Activated naive CD4-positive, alpha-beta T cell treated with anti-CD3 and anti-CD28 coated beads for 36 hours (primary cell): ENCODE measurements at regions of chr11 and their contacts with region 1.

Region 1: GRCh38 chr11:46392421-46393230 is 1.1 kb upstream of the CHRM4 start:
- DNase-seq: peak; percentile 82
- H3K4me3 Mint-ChIP-seq: peak overlapping the region; percentile 66
- H3K27ac Mint-ChIP-seq: no peak overlapping the region
- H3K4me1 Mint-ChIP-seq: peaks cover 25% of the 10 kb centered on the region
- H3K27me3 Mint-ChIP-seq: peaks cover 43% of the 10 kb centered on the region

Region 2: DNA sequence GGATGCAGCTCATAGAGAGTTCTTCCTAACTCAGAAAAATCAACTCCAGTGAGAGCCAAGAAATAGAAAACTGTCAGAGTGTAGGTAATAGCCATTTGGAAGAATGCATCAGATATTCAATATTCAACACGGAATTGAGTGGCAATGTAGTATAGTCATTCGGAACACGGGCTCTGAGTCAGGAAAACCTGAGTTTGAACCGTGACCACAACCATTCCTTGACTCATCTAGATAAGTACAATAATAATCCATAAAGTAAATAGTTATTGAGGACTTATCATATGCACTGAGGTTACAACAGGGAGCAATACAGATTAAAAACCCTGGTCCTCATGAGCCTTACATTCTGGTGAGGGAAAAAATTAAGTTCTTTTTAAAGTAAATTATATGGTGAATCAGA is 208.8 kb before region 1 on chr11:
- CTCF ChIA-PET with region 1: no interaction called
- intact Hi-C with region 1: no loop called
- DNase-seq: no peak
- H3K4me3 Mint-ChIP-seq: no peak overlapping the region
- H3K27ac Mint-ChIP-seq: no peak overlapping the region
- H3K4me1 Mint-ChIP-seq: no peaks in the 10 kb centered on the region
- H3K27me3 Mint-ChIP-seq: peaks cover 13% of the 10 kb centered on the region

Region 3: GRCh38 chr11:46380340-46381047 is 12.1 kb before region 1 on chr11:
- CTCF ChIA-PET with region 1: interaction called, 10 read pairs
- intact Hi-C with region 1: loop called (anchors 1 kb)
- DNase-seq: peak; percentile 90
- H3K4me3 Mint-ChIP-seq: peak overlapping the region; percentile 67
- H3K27ac Mint-ChIP-seq: peak overlapping the region; percentile 15
- H3K4me1 Mint-ChIP-seq: peaks cover 11% of the 10 kb centered on the region
- H3K27me3 Mint-ChIP-seq: peaks cover 7% of the 10 kb centered on the region

Region 4: DNA sequence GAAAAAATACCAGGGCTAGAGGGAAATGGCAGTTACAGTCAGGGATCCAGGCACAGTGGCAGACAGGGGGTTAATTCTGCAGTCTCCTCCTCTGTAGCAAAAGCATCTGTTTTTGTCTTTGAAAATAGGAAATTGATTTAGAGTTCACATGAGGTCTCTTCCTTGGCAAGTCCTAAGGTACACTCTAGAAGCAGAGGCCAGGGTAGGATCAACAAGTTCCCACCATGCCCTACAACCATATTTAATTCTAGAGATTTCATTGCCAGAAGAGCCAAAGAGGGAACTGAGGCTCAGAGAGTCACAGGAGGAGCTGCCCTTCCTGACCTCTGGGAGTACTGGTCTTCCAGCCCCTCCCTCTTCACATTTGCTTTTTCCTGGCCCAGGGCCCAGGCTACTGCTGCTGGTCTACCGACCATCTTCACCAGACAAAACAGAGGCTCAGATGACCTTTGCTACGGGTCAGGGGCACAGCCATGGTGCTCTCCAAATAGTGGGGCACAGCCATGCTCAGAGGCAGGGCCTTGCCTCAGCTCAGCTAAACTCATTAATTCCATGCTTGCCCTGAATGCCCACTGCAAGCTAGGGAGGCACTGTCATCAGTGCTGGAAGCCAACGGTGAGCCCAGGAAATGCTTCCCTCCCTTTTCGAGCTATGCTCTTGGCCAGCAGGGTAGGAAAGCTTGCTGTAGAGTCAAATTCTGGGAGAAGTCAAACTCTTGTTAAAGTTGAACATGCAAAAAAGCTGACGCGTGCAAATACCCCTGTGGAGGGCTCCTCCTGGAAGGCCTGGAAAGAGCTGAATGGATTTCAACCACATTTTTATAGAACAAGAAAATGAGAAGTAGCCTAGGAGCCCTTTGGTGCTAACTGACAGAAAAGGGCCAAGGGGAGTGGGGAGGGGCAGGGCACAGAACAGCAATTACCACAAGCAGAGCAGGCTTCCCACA is 10.6 kb after region 1 on chr11:
- CTCF ChIA-PET with region 1: interaction called, 19 read pairs
- intact Hi-C with region 1: no loop called
- DNase-seq: no peak
- H3K4me3 Mint-ChIP-seq: no peak overlapping the region
- H3K27ac Mint-ChIP-seq: no peak overlapping the region
- H3K4me1 Mint-ChIP-seq: no peaks in the 10 kb centered on the region
- H3K27me3 Mint-ChIP-seq: no peaks in the 10 kb centered on the region

Region 5: DNA sequence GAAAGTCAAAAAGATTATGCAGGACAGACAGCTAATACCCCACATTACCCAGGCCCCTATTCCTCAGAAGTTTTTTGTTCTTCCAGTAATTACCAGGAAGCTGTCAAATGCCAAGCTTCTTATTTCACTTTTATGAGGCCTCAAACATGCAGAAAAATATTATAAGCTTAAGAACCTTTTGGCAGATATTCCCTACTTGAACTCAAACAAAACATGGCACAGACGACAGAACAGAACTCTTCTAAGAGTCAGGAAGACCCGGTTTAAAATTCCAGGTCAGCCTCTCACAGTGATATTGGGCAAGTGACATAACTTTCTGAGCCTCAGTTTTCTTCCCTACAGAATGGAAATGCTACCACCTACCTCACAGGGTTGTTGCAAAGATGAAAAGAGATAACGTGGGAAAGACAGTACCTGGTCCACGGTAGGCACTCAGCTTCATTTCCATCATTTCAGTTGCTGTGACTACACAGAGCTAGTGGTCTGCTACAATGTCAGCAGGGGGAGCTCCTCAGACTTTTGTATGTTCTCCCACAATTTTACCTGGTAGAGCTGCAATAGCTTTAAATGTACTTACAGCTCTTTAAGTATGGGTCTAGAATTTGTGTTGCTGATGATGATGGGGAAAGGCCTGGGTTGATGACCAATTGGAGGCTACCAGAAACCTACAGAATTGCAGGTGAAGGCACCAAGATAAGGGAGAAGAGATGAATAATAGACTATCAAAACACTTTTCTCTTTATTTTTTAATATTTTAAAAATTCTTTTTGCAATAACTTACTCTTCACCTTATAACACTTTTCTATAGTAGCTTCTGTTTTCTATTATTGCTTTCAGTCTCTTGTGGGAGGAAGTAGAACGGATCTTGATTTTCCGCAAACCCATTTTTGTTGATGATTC is 97.3 kb after region 1 on chr11:
- CTCF ChIA-PET with region 1: interaction called, 15 read pairs
- intact Hi-C with region 1: no loop called
- DNase-seq: peak; percentile 45
- H3K4me3 Mint-ChIP-seq: no peak overlapping the region
- H3K27ac Mint-ChIP-seq: no peak overlapping the region
- H3K4me1 Mint-ChIP-seq: no peaks in the 10 kb centered on the region
- H3K27me3 Mint-ChIP-seq: no peaks in the 10 kb centered on the region

Region 6: DNA sequence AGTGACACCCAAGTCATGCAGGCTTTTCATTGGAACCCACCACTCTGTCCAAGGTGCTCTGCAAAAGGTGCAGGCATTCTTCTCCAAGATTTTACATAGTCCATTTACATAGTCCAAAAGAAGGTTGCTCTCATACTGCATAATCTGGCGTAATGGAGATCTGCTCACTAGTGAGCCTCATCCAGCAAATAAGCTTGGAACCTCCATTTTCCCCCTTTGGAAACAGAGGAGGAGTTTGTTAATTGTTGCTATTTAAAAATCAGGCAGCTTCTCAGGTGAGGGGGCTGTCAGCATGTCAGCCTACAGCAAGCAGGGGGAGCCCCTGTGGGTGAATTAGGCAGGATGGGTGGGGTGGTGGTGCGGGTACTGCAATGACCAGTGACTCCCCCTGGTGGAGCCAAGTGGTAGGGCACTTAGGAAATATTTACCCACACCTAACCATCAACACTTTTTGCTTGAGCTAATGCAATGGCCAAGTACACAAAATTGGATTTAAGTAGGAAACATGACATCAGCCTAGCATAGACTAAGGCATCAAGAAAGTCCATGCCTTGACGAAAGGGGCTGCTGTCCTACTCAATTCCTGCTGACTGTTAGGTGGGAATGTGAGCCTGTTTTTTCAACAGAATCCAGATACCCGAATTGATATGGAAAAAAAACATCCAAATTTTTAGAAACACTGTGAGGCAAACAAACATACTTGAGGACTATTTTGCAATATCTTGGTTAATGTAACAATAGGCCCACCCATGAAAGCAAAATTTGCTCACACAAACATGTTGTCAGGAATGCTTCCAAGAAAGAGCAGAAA is 136.7 kb after region 1 on chr11:
- CTCF ChIA-PET with region 1: interaction called, 12 read pairs
- intact Hi-C with region 1: loop called (anchors 1 kb)
- DNase-seq: peak; percentile 90
- H3K4me3 Mint-ChIP-seq: no peak overlapping the region
- H3K27ac Mint-ChIP-seq: no peak overlapping the region
- H3K4me1 Mint-ChIP-seq: peaks cover 33% of the 10 kb centered on the region
- H3K27me3 Mint-ChIP-seq: no peaks in the 10 kb centered on the region

Region 7: GRCh38 chr11:46537537-46538295 is 145.1 kb after region 1 on chr11:
- CTCF ChIA-PET with region 1: interaction called, 7 read pairs
- intact Hi-C with region 1: loop called (anchors 1 kb)
- DNase-seq: peak; percentile 79
- H3K4me3 Mint-ChIP-seq: no peak overlapping the region
- H3K27ac Mint-ChIP-seq: no peak overlapping the region
- H3K4me1 Mint-ChIP-seq: peaks cover 21% of the 10 kb centered on the region
- H3K27me3 Mint-ChIP-seq: no peaks in the 10 kb centered on the region

Region 8: DNA sequence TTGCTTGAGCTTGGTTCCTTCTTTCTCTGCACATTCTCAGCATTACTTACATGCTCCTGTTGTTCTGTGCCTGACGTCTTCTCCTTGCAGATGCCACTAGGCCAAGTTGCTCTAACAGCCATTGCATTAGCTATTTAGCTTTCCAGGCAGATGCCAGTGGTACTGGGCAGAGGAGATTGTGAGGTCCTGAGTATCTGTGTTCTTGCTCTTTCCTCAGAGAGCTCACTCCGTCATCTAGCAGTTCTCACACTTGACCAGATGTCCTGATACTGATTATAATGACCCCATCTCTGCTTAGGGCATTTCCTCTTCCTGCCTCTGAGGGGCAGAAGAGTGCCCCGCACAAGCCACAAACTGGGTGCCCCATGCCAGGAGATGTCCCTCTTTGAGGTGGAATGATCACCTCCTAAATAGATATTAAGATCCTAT is 277.1 kb after region 1 on chr11:
- CTCF ChIA-PET with region 1: no interaction called
- intact Hi-C with region 1: loop called (anchors 5 kb)
- DNase-seq: no peak
- H3K4me3 Mint-ChIP-seq: no peak overlapping the region
- H3K27ac Mint-ChIP-seq: peak overlapping the region; percentile 62
- H3K4me1 Mint-ChIP-seq: peaks cover 51% of the 10 kb centered on the region
- H3K27me3 Mint-ChIP-seq: no peaks in the 10 kb centered on the region